Lower leg skin (tissue), 4 donors: ENCODE measurements at regions of chr3 and their contacts with region 1.

Region 1: DNA sequence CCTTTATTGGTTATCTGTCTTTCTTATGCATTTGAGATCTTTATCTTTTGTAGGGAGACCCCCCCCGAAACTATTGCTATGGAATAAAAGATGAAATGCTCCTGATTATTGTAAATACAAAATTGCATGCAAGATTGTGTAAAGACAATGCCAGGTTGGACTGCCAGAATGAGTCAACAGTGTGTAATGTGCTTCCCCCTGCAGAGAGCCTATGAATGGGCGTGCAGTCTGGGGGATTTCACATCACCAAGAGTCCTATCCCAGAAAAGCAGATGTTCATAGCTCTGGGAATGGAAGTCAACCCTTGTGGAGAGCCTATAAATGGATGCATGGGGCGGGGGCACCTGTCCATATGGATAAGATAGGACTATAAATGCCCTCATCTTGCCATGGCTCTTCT is 584.3 kb downstream of the NSUN3 start:
- DNase-seq: no peak
- H3K4me3 ChIP-seq: no peak overlapping the region
- CTCF ChIP-seq: no peak
- POLR2A ChIP-seq: no peak

Region 2: DNA sequence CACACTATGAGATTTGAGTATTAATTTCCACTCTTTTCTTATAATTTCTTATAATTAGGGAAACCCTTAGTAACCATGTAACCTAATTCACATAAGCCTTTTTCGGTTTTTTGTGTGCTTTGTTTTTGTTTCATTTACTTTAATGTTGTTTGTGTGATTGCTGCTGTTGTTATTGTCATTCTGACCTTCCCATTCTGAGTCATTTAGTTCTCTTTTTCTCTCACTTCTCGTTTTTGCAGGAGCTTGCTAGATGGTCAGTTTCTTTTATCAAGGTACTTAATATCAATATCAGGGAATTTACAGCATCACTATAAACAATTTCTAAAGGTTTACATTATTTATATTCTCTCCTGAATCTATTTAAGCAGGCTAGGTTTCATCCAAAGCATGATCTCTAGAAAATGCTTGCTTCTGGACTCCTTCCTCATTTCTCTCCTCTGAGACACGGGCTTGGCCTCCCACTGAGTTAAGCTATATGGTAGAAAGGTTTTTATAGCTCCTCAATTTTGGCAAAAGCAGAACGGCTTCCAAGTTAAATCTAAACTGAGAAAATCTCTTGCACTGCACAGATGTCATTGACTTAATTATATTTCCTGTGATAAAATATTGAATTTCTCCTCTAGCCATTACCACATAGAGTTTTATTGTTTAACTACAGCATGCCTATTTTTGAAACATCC is 50.1 kb before region 1 on chr3:
- intact Hi-C with region 1: loop called (anchors 2 kb)
- DNase-seq: no peak
- H3K4me3 ChIP-seq: no peak overlapping the region
- CTCF ChIP-seq: no peak
- POLR2A ChIP-seq: no peak

Region 3: DNA sequence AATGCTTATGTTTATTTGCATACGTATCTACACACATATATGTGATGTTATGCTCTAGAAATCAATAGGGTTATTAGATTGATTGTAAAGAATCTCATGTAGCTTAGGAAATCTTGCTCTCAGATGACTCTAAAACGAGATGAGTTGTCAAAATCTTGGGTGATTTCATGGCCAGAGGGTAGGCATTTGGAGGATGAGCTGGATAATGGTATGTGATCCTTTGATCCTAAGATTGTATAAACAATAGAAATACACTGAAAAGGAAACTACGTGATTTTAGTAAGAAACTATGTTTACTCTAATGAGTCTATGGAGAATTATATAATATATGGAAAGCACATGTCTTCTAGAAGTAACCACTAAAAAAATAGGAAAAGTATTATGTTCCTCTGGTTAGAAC is 92.3 kb after region 1 on chr3:
- intact Hi-C with region 1: no loop called
- DNase-seq: no peak
- H3K4me3 ChIP-seq: no peak overlapping the region
- CTCF ChIP-seq: no peak
- POLR2A ChIP-seq: no peak